ENCODE measurements at regions of chr7 and their contacts with region 1.

Region 1: DNA sequence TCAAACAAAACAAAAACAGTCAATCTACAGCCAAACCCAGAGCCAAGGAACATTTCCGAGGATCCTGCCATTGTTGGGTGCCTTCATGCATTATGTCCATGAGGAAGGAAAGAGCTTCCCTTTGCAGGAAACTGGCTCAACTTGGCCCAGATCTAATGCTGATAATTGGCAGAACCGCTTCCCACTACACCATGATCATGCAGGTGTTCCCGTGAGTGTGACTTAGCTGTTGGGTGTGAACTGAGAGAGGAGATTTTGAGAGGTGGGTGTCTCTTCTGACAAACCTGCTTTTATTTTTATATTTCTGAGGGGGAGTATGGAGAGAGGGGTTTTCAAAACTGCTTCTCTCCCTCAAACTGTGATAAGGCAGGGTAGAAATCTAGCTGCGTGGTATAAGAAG is 14.6 kb downstream of the SAP25 start:
- DNase-seq: no peak
- H3K4me3 Mint-ChIP-seq: no peak overlapping the region
- H3K27ac Mint-ChIP-seq: no peak overlapping the region
- H3K4me1 Mint-ChIP-seq: no peaks in the 10 kb centered on the region
- H3K27me3 Mint-ChIP-seq: no peaks in the 10 kb centered on the region
- CTCF ChIP-seq: no peak

Region 2: DNA sequence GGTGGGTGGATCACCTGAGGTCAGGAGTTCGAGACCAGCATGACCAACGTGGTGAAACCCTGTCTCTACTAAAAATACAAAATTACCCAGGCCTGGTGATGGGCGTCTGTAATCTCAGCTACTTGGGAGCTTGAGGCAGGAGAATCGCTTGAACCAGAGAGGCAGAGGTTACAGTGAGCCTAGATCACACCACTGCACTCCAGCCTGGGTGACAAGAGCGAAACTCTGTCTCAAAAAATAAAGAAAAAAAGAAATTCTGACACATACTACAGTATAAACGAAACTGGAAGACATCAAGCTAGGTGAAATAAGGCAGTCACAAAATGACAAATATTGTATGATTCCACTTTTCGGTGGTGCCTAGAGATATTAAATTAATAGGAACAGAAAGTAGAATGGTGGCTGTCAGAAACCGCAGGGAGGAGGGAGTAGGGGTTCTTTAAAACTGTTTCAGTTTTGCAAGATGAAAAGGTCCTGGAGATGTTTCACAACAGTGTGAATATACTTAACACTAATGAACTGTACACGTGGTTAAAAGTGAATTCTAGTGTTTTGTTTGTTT is 162.6 kb before region 1 on chr7:
- CTCF ChIA-PET with region 1: no interaction called
- intact Hi-C with region 1: no loop called
- DNase-seq: no peak
- H3K4me3 Mint-ChIP-seq: no peak overlapping the region
- H3K27ac Mint-ChIP-seq: no peak overlapping the region
- H3K4me1 Mint-ChIP-seq: no peaks in the 10 kb centered on the region
- H3K27me3 Mint-ChIP-seq: peaks cover 45% of the 10 kb centered on the region
- CTCF ChIP-seq: no peak

Region 3: DNA sequence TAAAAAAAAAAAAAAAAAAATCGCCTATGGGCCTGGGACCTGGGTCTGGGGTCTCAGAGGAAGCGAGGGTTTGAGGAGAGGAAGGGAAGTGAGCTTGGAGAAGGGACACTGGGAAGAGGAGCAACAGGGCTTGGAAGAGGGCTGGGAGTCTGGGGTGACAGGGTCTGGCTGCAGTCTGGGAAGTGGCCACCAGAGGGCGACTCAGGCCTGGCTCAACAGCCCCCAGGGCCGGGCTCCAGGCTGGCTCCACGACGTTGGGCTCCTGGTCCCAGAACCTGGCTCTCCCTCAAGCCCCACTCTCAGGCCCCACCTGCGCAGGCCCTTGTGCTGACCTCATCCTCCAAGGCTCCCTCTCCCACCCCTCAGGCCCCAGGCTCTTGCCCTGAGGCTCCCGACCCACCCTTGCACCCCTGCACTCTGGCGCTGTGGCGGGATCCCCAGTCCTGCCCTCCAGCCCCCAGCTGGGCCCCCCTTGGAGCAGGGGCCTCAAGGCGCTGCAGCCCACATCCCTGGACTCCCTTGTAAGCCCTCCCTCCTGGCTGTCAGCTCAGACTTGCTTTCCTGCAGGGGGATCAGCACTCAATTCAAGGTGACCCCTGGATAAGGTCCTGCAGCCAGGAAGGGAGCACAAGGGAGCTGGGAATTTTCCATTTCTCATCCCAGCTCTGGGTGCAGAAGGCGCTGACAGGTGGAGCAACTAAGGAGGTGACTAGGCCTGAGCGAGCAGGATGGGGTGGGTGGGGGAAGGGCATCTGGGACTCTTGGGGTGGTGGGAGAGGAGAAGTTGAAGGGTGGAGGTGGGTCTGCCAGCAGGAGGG is 89.7 kb before region 1 on chr7:
- CTCF ChIA-PET with region 1: interaction called, 10 read pairs
- intact Hi-C with region 1: loop called (anchors 2 kb)
- DNase-seq: peak; percentile 85
- H3K4me3 Mint-ChIP-seq: no peak overlapping the region
- H3K27ac Mint-ChIP-seq: no peak overlapping the region
- H3K4me1 Mint-ChIP-seq: no peaks in the 10 kb centered on the region
- H3K27me3 Mint-ChIP-seq: no peaks in the 10 kb centered on the region
- CTCF ChIP-seq: peak; percentile 80

Region 4: DNA sequence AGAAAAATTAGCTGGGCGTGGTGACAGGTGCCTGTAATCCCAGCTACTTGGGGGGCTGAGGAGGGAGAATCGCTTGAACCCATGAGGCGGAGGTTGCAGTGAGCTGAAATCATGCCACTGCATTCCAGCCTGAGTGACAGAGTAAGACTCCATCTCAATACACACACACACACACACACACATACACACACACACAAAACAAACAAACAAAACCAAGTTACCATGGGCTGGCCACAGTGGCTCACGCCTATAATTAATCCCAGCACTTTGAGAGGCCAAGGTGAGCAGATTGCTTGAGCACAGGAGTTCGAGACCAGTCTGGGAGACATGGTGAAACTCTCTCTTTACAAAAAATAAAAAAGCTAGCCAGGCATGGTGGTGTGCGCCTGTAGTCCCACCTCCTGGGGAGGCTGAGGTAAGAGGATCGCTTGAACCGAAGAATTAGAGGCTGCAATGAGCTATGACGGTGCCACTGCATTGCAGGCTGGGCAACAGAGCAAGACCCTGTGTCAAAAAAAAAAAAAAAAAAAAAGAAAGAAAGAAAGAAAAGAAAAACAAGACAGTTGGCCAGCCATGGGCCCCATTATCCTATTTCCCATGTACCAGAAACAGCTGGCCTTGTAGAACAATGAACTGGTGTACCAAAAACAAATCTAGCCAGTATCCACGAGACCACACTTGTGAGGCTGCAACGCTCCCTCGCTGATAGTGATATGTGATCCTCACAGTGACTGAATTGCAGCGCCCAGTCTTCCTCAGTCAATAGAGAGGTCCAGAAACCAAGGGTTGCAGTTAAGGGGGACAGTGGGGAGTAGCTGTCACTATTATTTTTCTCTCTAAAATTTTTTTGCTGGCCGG is 26.7 kb before region 1 on chr7:
- CTCF ChIA-PET with region 1: no interaction called
- intact Hi-C with region 1: no loop called
- DNase-seq: no peak
- H3K4me3 Mint-ChIP-seq: no peak overlapping the region
- H3K27ac Mint-ChIP-seq: no peak overlapping the region
- H3K4me1 Mint-ChIP-seq: no peaks in the 10 kb centered on the region
- H3K27me3 Mint-ChIP-seq: no peaks in the 10 kb centered on the region
- CTCF ChIP-seq: no peak

Region 5: DNA sequence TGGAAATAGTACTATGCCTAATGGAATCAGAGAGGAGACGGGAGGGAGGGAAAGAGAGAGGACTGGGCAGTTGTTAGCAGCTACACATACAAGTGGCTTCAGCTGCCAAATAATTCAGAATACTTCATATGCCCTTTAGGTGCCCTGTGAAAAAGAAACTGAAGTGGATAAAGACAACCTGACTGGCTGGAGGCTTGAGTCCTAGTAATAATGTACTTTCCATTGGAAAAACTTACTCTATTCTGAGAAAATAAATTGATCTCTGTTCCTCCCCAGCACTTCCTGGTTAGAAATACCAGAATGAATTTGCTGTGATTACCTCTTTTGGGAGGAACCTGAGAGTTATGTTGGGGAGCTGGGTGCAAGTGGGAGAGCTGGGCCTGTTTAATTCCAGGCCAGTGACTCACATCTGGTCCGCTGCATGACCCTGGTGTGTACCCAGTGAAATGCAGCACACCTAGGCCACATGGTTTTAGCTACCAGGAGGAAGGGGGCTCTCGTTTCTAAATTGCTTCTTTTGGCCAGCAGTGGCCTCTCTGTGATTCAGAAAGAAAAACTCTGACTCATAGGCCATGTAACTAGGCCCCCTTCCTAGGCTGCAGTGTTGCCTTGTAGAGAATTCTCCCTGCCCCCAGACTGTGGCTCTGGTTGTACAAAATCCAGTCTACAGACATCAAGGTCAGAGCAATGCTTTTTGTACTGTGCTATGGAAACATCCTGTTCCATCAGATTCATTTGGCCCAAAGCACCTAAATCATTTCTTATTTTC is 13.6 kb before region 1 on chr7:
- CTCF ChIA-PET with region 1: interaction called, 12 read pairs
- intact Hi-C with region 1: no loop called
- DNase-seq: peak; percentile 79
- H3K4me3 Mint-ChIP-seq: peak overlapping the region; percentile 56
- H3K27ac Mint-ChIP-seq: peak overlapping the region; percentile 99
- H3K4me1 Mint-ChIP-seq: peaks cover 80% of the 10 kb centered on the region
- H3K27me3 Mint-ChIP-seq: no peaks in the 10 kb centered on the region
- CTCF ChIP-seq: no peak

Measured in Calu3 (cell line).